ENCODE measurements at regions of chr22 and their contacts with region 1.

Region 1: GRCh38 chr22:40651563-40652501 is 15.3 kb upstream of the MRTFA start:
- DNase-seq: peak; percentile 99
- H3K4me3 Mint-ChIP-seq: peak overlapping the region; percentile 83
- H3K27ac Mint-ChIP-seq: peak overlapping the region; percentile 98
- H3K4me1 Mint-ChIP-seq: peaks cover 32% of the 10 kb centered on the region
- H3K27me3 Mint-ChIP-seq: no peaks in the 10 kb centered on the region
- CTCF ChIP-seq: no peak

Region 2: DNA sequence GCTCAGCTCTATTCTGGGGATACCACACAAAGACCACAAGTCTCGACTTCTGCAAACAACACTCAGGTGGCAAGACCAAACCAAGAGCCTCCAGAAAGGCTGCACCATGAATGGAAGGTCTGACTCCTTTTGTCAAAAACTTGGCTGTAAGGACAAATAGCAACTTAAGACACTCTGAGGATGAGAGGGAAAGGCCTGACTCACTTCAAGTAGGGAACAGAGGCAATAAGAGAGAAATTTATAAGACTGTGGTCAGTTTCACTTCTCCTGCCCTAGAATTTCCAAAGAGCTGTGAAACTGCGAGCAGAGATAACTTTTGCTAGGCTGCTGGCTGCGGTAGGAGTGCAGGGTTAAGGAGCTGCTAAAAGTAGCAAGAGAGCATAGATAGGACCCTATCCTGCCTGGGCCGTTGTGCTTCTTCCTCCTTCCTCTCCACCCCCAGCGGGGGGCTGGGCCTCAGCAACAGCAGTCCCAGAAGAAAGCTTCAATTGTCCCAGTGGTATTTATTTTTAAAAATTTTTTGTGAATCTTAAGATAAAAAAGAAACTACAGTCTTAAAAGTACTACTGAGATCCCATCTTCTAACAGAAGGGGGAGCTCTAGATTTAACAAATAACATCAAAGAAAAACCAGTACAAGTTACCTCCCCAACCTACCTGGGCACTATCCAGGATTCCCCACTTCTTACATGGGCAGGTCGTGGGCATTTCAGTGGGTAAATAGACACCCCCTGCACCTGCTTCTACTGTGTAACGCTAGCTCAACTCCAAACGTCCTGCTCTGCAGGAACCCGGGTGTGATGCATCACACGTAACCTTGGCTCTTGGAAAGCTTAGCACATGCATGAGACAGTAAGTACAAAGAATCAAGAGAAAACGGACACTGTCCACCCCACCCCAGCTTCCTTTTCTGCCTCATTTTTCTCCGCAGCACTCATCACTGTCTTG is 215.1 kb before region 1 on chr22:
- CTCF ChIA-PET with region 1: interaction called, 220 read pairs
- POLR2A ChIA-PET with region 1: interaction called, 44 read pairs
- intact Hi-C with region 1: no loop called
- DNase-seq: peak; percentile 71
- H3K4me3 Mint-ChIP-seq: no peak overlapping the region
- H3K27ac Mint-ChIP-seq: peak overlapping the region; percentile 19
- H3K4me1 Mint-ChIP-seq: peaks cover 27% of the 10 kb centered on the region
- H3K27me3 Mint-ChIP-seq: no peaks in the 10 kb centered on the region
- CTCF ChIP-seq: peak; percentile 54

Region 3: GRCh38 chr22:40499187-40499753 is 152.6 kb before region 1 on chr22:
- CTCF ChIA-PET with region 1: no interaction called
- POLR2A ChIA-PET with region 1: interaction called, 12 read pairs
- intact Hi-C with region 1: no loop called
- DNase-seq: peak; percentile 90
- H3K4me3 Mint-ChIP-seq: peak overlapping the region; percentile 25
- H3K27ac Mint-ChIP-seq: peak overlapping the region; percentile 78
- H3K4me1 Mint-ChIP-seq: peaks cover 29% of the 10 kb centered on the region
- H3K27me3 Mint-ChIP-seq: no peaks in the 10 kb centered on the region
- CTCF ChIP-seq: no peak

Region 4: DNA sequence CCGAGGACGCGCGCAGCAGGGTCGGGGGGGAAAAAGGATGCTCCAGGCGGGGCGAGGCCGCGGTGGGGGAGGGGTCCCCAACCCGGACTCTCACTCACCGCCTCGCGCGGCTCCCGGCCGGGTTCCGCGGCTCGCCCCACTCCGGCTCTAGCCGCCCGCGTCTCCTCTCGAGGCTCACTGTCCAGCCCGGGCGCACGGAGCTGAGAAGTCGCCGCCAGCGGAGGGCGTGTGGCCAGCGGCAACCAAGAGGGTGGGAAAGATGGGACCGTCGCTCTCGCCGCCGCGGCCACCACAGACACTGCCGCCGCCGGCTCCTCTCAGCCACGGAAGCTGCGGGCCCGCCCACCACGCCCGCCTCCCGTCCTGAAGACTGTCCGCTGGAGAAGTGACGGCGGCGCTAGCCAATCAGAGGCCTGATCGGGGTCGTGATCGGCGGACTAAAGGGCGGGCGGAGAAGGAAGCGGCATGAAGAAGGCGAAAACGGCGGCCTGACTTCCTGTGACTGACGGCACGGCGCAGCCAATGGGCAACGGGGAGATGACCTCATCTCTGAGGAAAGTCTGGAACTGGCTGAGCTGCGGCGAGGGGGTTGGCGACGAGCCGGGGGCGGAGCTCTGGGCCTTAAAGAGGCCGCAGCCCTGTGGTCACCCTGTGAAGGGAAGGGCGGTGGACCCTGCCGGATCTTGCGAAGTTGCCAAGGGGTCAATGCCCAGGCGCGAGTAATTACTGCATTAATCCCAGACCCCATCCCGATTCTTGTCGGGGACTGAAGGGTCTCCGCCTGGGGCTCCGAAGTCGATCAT is 15.3 kb before region 1 on chr22 and contains the start of gene MRTFA:
- CTCF ChIA-PET with region 1: interaction called, 4 read pairs
- POLR2A ChIA-PET with region 1: interaction called, 59 read pairs
- intact Hi-C with region 1: no loop called
- DNase-seq: peak; percentile 99
- H3K4me3 Mint-ChIP-seq: peak within 1 kb of the TSS; percentile 88
- H3K27ac Mint-ChIP-seq: peak within 1 kb of the TSS; percentile 94
- H3K4me1 Mint-ChIP-seq: peaks cover 28% of the 10 kb centered on the region
- H3K27me3 Mint-ChIP-seq: no peaks in the 10 kb centered on the region
- CTCF ChIP-seq: no peak
- total RNA-seq, gene MRTFA: 47.2 and 52.7 TPM in 2 replicates

Region 5: DNA sequence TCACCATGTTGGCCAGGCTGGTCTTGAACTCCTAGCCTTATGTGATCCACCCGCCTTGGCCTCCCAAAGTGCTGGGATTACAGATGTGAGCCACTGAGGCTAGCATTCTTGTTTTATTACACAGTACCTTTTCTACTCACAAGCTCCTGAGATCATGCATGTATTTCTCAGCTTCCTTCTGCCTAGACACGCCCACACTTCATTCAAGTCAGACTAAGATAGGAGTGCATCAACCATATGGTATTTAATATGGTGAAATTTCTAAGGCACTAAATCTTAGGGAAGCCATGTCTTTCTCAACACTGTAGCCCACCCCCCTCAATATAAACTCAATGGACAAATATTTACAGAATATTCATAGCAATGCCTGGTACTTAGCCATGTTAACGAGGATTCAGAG is 105.2 kb after region 1 on chr22:
- CTCF ChIA-PET with region 1: interaction called, 49 read pairs
- POLR2A ChIA-PET with region 1: interaction called, 46 read pairs
- intact Hi-C with region 1: loop called (anchors 1 kb)
- DNase-seq: no peak
- H3K4me3 Mint-ChIP-seq: no peak overlapping the region
- H3K27ac Mint-ChIP-seq: no peak overlapping the region
- H3K4me1 Mint-ChIP-seq: peaks cover 11% of the 10 kb centered on the region
- H3K27me3 Mint-ChIP-seq: no peaks in the 10 kb centered on the region
- CTCF ChIP-seq: no peak

Region 6: GRCh38 chr22:40898850-40899357 is 247.1 kb after region 1 on chr22:
- CTCF ChIA-PET with region 1: interaction called, 3 read pairs
- POLR2A ChIA-PET with region 1: interaction called, 3 read pairs
- intact Hi-C with region 1: loop called (anchors 10 kb)
- DNase-seq: peak; percentile 53
- H3K4me3 Mint-ChIP-seq: no peak overlapping the region
- H3K27ac Mint-ChIP-seq: no peak overlapping the region
- H3K4me1 Mint-ChIP-seq: peaks cover 6% of the 10 kb centered on the region
- H3K27me3 Mint-ChIP-seq: no peaks in the 10 kb centered on the region
- CTCF ChIP-seq: peak; percentile 50

Measured in MCF 10A (cell line).